Psoas muscle (tissue), 8 donors: ENCODE measurements at regions of chr12 and their contacts with region 1.

Region 1: GRCh38 chr12:11067514-11067913 is 5.4 kb upstream of the TAS2R46 start:
- DNase-seq: no peak
- ATAC-seq: peak in 3 of 4 donors; percentile 31 to 58 (median 51)
- H3K4me3 ChIP-seq: no peak overlapping the region
- H3K27ac ChIP-seq: no peak overlapping the region
- H3K4me1 ChIP-seq: peaks cover 3% of the 10 kb centered on the region
- H3K27me3 ChIP-seq: no peaks in the 10 kb centered on the region
- CTCF ChIP-seq: no peak

Region 2: DNA sequence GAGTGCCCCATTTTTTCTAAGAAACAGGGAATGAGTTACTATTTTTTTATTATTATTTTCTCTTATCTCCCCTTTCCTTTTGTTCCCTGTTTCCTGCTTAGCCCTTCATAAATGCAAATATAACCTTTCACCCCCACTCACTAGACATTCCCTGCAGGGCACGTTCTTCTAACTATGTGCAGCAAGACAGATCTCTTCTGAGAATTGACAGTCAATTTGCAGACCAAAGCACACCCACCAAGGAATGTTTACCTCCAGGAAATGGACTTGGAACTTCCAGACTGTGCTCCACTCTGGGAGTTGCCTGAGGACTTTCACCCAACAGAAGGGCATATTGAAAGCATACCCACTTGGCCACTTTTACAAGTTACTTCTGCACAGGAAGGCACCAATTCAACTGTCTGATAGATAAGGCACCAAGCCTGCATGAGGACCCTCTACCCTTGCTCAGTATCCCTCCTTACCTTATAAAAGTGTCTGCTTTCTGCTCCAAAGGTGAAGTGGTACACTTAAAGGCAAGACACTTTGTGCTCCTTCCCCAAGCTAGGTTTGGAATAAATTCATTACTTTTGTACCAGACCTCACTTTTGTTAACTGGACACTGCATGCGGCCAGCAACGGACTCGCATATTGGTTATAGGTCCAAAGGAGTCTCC is 51.6 kb before region 1 on chr12:
- intact Hi-C with region 1: loop called (anchors 1 to 2 kb)
- DNase-seq: no peak
- ATAC-seq: no peak
- H3K4me3 ChIP-seq: no peak overlapping the region
- H3K27ac ChIP-seq: no peak overlapping the region
- H3K4me1 ChIP-seq: no peaks in the 10 kb centered on the region
- H3K27me3 ChIP-seq: no peaks in the 10 kb centered on the region
- CTCF ChIP-seq: no peak

Region 3: DNA sequence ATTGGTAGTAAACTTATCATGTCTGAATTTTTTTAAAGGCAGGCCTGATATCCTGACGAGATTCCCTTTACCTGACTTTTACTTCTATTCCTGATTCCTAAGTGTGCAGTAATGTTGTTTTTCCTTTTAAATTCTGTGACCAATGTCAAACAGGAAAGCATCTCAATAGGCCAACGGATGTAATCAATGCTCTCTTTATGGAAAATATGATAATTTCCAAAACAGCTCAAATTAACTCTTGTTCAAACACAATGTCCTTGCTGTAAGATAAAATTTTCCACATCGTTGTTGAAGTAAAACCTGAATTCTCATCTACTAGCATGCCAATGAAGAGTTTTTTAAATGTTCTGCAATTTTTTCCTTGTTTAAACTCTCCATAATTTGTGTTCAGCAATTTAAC is 28.3 kb before region 1 on chr12:
- intact Hi-C with region 1: loop called in 1 of 2 experiments (anchors 2 kb)
- DNase-seq: no peak
- ATAC-seq: no peak
- H3K4me3 ChIP-seq: no peak overlapping the region
- H3K27ac ChIP-seq: no peak overlapping the region
- H3K4me1 ChIP-seq: no peaks in the 10 kb centered on the region
- H3K27me3 ChIP-seq: no peaks in the 10 kb centered on the region
- CTCF ChIP-seq: no peak